ENCODE measurements at regions of chr1 and their contacts with region 1.

Region 1: DNA sequence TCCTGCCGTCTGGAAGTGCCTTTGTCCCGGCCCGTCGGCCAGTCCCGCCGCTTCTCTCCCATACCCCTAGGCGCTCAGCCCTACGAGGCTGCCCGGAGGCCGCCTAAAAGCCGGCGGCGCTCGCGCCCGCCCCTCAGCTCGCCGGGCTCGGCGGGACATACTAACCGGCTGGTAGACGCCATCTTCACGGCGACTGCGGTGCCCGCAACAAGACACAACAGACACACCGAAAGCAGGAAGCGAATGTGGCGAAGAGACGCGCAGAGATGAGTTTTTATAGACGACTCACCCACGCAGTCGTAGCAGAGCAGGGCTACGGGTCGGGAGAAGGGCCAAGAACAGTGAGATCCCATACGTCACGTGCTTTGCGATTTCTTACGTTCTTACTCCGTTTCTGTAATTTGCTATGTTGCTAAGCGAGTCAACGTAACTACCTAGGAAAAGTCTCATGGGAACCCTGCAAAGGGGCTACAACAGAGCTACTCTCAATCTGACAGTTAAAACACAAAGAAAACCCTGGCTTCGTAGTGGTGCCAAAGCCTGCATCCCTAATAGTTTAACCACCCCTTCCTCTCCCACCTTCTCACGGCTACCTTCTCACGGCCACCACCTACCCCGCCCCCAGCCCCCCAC is at the start of gene GTF2B:
- DNase-seq: peak; percentile 94
- H3K4me3 ChIP-seq: peak within 1 kb of the TSS; percentile 87 to 93
- H3K27ac ChIP-seq: peak within 1 kb of the TSS; percentile 89 to 95
- H3K4me1 ChIP-seq: no peaks in the 10 kb centered on the region
- H3K27me3 ChIP-seq: no peaks in the 10 kb centered on the region
- CTCF ChIP-seq: peak in 2 of 4 experiments; percentile 23 to 29
- POLR2A ChIP-seq: peak; percentile 76
- total RNA-seq, gene GTF2B: 29.8 to 34.0 TPM

Region 2: DNA sequence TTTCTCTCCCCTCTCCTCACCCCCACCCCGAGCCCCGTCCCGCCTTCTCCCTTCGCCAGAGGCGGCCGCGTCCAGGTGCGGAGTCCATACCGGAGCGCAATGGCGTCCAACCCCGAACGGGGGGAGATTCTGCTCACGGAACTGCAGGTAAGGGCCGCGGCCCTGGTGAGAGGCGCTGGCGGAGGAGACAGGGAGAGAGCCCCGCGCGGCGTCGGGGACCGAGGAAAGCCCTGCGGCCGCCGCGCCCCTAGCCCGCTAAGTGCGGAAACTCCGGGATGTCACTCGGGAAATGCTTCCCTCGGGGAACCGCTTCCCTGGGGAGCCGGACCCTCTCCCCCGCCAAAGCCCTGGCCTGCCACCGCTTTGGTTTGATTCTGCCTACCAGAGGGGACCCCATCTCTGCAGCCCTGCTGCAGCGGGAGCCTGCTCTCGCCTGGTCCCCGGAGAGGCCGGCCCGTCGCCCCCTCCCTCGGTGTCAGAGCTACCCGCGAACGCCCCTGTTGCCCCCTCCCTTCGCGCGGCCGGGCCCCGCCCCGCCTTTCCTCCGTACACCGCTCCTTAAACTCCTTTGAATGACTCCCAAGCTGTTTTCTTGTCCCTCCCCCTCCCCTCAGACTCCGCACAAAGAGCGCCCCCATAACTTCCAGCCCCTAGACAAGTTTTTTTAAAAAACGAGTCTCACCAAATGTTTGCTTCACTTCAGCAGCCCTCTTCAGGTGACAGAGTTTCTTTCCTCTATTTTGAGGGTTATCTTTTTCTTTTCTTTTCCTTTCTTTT is 206.8 kb before region 1 on chr1:
- intact Hi-C with region 1: loop called (anchors 5 kb)
- DNase-seq: peak; percentile 57
- H3K4me3 ChIP-seq: peak overlapping the region; percentile 85 to 88
- H3K27ac ChIP-seq: peak overlapping the region; percentile 88 to 90
- H3K4me1 ChIP-seq: no peaks in the 10 kb centered on the region
- H3K27me3 ChIP-seq: no peaks in the 10 kb centered on the region
- CTCF ChIP-seq: no peak
- POLR2A ChIP-seq: peak; percentile 23

Region 3: DNA sequence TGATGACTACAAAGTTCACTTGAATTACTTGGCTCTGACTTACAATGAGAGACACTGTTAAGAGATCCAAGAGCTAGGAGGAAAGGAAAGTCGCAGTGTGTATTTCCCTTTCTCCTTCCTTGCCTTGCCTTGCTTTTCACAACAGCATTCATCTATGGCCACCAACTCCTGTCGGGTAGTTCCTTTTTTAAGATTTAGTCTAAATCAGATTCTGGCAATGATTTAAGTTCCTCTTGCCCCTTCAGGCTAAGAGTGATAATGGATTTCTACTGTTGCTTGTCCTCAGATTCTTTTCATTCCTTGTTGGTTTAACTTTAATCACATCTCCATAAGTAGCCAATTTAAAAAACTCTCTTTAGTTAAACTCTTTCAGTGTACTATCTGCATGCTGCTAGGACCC is 91.9 kb before region 1 on chr1:
- intact Hi-C with region 1: loop called (anchors 10 kb)
- DNase-seq: no peak
- H3K4me3 ChIP-seq: no peak overlapping the region
- H3K27ac ChIP-seq: no peak overlapping the region
- H3K4me1 ChIP-seq: no peaks in the 10 kb centered on the region
- H3K27me3 ChIP-seq: no peaks in the 10 kb centered on the region
- CTCF ChIP-seq: no peak
- POLR2A ChIP-seq: no peak

Measured in prostate gland (tissue), 2 donors.